ENCODE measurements at regions of chr17 and their contacts with region 1.

Region 1: GRCh38 chr17:42577532-42578281 is at the start of gene PSMC3IP:
- DNase-seq: peak; percentile 98
- H3K4me3 Mint-ChIP-seq: peak within 1 kb of the TSS; percentile 98
- H3K27ac Mint-ChIP-seq: peak within 1 kb of the TSS; percentile 96
- H3K4me1 Mint-ChIP-seq: peaks cover 44% of the 10 kb centered on the region
- H3K27me3 Mint-ChIP-seq: no peaks in the 10 kb centered on the region
- total RNA-seq, gene PSMC3IP: 38.6 to 42.2 TPM

Region 2: GRCh38 chr17:42554250-42555121 is 23.2 kb before region 1 on chr17:
- CTCF ChIA-PET with region 1: interaction called, 4 read pairs
- intact Hi-C with region 1: loop called (anchors 2 kb)
- DNase-seq: peak; percentile 80
- H3K4me3 Mint-ChIP-seq: peak overlapping the region; percentile 92
- H3K27ac Mint-ChIP-seq: peak overlapping the region; percentile 91
- H3K4me1 Mint-ChIP-seq: peaks cover 19% of the 10 kb centered on the region
- H3K27me3 Mint-ChIP-seq: no peaks in the 10 kb centered on the region

Region 3: DNA sequence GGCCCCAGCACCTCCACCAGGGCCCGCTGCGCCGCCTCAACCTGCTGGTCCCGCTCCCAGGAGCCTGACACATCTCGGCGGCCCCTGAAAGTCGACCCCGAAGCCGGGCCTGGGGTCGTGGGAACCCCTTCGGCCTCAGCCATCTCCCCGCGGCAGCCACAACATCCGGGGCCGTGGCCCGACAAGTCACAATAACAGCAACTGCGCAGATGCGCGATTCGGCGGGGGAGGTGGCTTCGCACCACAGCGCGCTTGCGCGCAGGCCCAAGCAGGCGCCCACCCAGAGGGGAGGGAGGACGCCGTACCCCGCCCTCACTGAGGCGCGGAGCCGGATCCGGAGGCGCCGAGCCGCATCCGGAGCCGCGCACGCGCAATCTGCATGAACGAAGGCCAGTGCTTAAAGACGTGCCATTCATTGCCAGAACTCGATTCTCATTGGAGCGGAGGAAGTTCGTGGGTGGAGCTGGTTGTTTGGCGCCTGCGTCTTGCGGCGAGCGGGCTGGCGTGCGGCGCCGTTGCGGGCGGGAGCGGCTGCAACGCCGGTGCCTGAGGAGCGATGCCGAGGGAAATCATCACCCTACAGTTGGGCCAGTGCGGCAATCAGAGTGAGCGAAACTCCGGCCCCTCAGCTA is 31.6 kb after region 1 on chr17 and contains the starts of genes RETREG3 and TUBG1:
- CTCF ChIA-PET with region 1: interaction called, 30 read pairs
- intact Hi-C with region 1: loop called (anchors 1 kb)
- DNase-seq: peak; percentile 99
- H3K4me3 Mint-ChIP-seq: peak within 1 kb of the TSS; percentile 100
- H3K27ac Mint-ChIP-seq: peak within 1 kb of the TSS; percentile 93
- H3K4me1 Mint-ChIP-seq: peaks cover 45% of the 10 kb centered on the region
- H3K27me3 Mint-ChIP-seq: no peaks in the 10 kb centered on the region
- total RNA-seq, gene RETREG3: 28.6 to 33.5 TPM
- total RNA-seq, gene TUBG1: 91.3 to 92.0 TPM

Region 4: GRCh38 chr17:42677008-42677857 is 99.5 kb after region 1 on chr17:
- CTCF ChIA-PET with region 1: interaction called, 33 read pairs
- intact Hi-C with region 1: loop called (anchors 1 kb)
- DNase-seq: peak; percentile 100
- H3K4me3 Mint-ChIP-seq: peak overlapping the region; percentile 88
- H3K27ac Mint-ChIP-seq: peak overlapping the region; percentile 41
- H3K4me1 Mint-ChIP-seq: peaks cover 51% of the 10 kb centered on the region
- H3K27me3 Mint-ChIP-seq: peaks cover 48% of the 10 kb centered on the region

Region 5: DNA sequence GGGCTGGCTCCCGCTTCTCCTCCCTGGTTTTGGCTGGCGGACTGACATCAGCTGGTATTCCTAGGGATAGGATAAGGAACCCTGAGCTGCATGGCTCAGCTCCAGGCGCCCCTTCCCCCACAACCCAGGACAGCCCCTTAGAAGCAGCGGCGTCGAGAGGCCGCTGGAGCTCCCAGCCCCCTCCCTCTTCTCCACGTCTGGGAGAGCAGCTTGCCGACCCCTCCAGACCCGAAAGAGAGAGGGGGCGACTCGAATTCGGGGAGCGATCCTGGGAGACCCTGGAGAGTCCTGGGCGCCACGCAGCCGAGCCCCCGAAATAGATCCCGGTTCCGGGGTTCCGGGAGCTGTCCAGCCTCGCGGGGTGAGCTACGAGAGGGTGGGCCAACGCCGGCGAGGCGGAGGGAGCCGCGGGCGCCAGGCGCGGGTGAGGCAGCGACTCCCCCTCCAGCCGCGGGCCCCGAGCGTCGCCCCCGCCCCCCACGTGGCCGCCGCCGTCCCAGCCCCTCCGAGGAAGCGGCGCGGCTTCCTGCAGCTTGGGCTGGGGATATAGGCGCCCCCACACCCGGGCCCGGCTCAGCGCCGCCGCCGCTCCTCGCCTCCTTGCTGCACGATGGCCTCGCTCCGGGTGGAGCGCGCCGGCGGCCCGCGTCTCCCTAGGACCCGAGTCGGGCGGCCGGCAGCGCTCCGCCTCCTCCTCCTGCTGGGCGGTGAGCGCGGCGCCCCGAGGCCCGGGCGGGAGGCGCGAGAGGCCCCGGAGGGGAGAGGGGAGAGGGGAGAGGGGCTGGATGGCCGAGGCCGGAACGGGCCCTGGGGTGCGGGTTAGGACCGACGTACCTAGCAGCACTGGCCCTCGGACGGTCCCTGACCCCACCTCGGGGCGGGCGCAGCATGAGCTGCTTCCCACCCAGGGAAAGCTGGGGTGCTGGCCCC is 183.2 kb after region 1 on chr17 and contains the start of gene RAMP2:
- CTCF ChIA-PET with region 1: interaction called, 31 read pairs
- intact Hi-C with region 1: loop called (anchors 1 kb)
- DNase-seq: no peak
- H3K4me3 Mint-ChIP-seq: no peak within 1 kb of the TSS
- H3K27ac Mint-ChIP-seq: no peak within 1 kb of the TSS
- H3K4me1 Mint-ChIP-seq: peaks cover 11% of the 10 kb centered on the region
- H3K27me3 Mint-ChIP-seq: peaks cover 56% of the 10 kb centered on the region
- total RNA-seq, gene RAMP2: not detected

Region 6: GRCh38 chr17:42803074-42803883 is 225.6 kb after region 1 on chr17:
- CTCF ChIA-PET with region 1: no interaction called
- intact Hi-C with region 1: no loop called
- DNase-seq: no peak
- H3K4me3 Mint-ChIP-seq: no peak overlapping the region
- H3K27ac Mint-ChIP-seq: no peak overlapping the region
- H3K4me1 Mint-ChIP-seq: peaks cover 6% of the 10 kb centered on the region
- H3K27me3 Mint-ChIP-seq: no peaks in the 10 kb centered on the region

Region 7: DNA sequence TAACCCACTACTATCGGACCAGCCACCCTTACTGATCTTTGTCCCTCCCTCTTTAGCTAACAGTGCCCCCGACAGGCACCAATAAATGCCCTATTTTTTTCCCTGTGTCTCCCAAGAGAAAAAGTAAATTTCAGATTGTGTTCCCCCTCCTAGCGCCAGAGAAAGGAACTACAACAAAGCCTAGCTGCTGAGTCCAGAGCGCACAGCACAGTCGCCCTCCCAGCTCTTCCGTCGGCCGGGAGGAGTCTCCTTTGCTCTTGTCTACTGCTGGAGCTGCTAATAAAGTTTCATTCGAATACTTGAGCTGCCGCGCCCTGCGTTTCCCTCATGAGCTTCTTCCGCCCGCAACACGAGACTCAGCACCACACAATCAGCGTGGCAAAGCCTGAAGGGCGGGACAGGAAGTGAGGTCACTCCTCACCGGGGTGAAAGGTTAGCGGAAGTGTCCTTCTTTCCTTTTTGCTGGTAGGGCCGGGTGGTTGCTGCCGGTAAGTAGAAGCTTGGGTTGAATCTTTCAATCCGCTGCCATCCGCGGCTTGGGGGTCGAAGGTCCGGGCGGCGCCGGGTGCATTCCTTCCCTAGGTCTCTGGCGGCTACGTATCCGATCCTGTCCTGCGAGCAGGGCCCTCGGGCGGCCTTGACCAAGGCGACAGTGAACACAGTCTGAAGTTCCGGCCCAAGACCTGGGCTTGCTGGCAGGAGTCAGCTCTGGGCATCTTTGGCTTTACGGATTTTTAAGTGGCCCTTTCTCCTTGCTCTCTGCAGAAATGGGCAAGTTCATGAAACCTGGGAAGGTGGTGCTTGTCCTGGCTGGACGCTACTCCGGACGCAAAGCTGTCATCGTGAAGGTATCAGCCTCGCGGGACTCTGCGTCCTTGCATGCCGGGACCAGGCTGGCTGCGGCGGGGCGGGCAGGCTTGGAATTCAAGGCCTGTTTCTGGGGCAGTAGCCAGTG is 420.6 kb after region 1 on chr17 and contains the start of gene RPL27:
- CTCF ChIA-PET with region 1: no interaction called
- intact Hi-C with region 1: loop called (anchors 1 kb)
- DNase-seq: peak; percentile 99
- H3K4me3 Mint-ChIP-seq: peak within 1 kb of the TSS; percentile 97
- H3K27ac Mint-ChIP-seq: peak within 1 kb of the TSS; percentile 97
- H3K4me1 Mint-ChIP-seq: peaks cover 34% of the 10 kb centered on the region
- H3K27me3 Mint-ChIP-seq: no peaks in the 10 kb centered on the region
- total RNA-seq, gene RPL27: 1,974 to 2,033 TPM

Measured in activated naive CD4-positive, alpha-beta T cell treated with anti-CD3 and anti-CD28 coated beads for 36 hours (primary cell).